AG04449 (cell line): ENCODE measurements at regions of chr1 and their contacts with region 1.

Region 1: DNA sequence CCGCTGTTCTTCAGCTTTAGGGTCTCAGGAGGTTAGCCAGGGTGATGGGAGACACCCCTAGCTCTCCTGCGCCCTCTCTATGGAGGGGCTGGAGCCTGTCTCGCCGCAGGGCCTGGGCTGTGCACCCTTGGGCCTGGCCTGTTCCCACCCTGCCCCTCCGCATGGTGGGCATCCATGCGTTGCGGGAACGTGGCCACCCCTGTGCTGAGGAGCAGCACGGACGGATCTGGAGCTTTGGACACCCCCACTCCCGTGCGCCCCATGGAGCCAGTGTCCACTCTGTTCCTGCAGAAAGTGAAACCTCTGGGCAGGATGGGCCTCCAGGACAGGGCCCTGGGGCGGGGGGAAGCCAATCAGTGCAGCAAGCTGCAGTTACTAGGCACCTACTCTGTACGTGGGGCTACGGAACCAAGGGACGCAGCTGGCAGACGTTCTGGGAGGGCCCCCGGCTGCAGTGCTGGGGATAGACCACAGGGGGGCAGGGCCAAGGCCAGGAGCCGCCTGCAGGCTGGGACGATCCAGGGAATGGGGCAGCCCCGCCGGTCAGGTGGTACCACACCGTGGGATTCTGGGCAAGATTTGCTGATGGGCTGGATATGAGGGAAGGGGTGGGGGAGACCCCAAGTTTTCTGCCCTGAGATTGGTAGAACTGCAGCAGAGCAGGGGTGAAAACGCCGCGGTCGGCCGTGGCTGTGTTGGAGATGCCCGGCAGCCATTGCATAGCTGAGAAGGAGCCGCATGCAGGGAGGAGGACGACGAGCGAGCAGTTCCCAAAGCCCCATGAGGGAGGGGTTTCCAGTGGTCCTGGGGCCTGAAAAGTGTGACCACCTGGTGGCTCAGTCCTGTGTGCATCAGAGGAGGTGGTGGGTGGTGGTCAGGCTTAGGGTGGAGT is 43.3 kb downstream of the TP73 start:
- DNase-seq: no peak
- H3K4me3 ChIP-seq: no peak overlapping the region
- CTCF ChIP-seq: peak; percentile 83

Region 2: DNA sequence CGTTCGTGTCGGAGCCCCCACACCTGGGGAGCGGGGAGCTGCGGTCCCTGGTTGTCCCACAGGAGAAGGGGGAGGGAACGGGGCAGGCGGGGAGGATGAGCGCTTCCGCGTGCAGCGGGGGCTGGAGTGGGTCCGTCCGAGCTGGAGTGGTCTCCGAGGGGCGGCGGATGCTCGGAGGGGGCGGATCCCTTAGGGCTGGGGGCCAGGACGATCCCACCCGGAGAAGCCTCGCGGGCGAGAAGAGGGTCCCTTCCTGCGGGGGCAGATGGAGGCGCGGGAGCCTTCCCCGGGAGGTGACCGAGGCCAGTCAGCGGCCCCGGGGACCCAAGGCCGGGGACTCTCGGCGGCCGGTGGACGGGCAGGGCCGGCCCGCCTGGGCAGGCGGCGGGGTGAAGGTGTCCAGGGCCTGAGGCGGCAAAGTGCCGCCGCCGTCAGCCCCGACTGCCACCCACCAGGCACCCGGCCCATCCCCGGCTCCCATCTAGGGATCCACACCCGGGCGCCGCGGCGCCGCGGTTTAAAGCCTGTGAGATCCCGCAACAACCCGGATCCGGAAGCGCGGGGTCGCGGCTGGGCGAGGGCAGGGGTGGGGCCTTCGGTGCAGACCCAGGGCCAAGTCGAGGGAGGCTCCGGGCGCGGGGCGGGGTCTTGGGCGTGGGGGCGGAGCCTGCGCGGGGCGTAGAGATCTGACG is 51.4 kb after region 1 on chr1:
- CTCF ChIA-PET with region 1: no interaction called
- POLR2A ChIA-PET with region 1: no interaction called
- DNase-seq: no peak
- H3K4me3 ChIP-seq: peak overlapping the region; percentile 58
- CTCF ChIP-seq: no peak

Region 3: GRCh38 chr1:3796215-3797061 is 100.9 kb after region 1 on chr1 and contains the start of gene LRRC47:
- CTCF ChIA-PET with region 1: interaction called, 10 read pairs
- POLR2A ChIA-PET with region 1: no interaction called
- DNase-seq: peak; percentile 34
- H3K4me3 ChIP-seq: peak within 1 kb of the TSS; percentile 81
- CTCF ChIP-seq: no peak

Region 4: GRCh38 chr1:3883194-3883925 is 187.8 kb after region 1 on chr1:
- CTCF ChIA-PET with region 1: no interaction called
- POLR2A ChIA-PET with region 1: no interaction called
- DNase-seq: no peak
- H3K4me3 ChIP-seq: no peak overlapping the region
- CTCF ChIP-seq: no peak